GM12878 (cell line): ENCODE measurements at regions of chr7 and their contacts with region 1.

Region 1: DNA sequence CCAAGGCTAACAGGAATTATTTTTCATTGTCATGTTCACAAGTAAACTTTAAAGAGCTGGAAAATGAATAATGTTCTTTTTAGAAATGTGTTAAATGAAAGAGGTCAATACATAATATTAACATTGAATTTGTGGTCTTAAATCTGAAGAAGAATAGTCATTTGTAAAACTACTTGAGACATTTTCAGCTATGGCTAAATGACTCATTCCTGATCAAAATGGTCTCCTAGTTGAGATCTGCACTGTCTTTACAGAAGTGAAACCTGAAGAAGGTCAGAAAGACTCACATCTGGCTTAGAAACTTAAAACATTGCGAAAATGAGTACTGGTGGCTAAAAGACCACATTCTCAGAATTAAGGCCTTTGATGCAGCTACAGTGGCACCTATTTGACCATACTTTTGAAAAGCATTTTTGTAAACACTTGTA is 5.9 kb downstream of the PIK3CG start:
- DNase-seq: peak; percentile 95
- ATAC-seq: peak; percentile 90
- H3K4me3 ChIP-seq: no peak overlapping the region
- H3K27ac ChIP-seq: no peak overlapping the region; the same call in 1 of the 2 replicates
- H3K4me1 ChIP-seq: peaks cover 35% of the 10 kb centered on the region
- H3K27me3 ChIP-seq: no peaks in the 10 kb centered on the region
- CTCF ChIP-seq: no peak
- EP300 ChIP-seq: peak; percentile 98 to 100
- POLR2A ChIP-seq: no peak
- RAD21 ChIP-seq: no peak

Region 2: DNA sequence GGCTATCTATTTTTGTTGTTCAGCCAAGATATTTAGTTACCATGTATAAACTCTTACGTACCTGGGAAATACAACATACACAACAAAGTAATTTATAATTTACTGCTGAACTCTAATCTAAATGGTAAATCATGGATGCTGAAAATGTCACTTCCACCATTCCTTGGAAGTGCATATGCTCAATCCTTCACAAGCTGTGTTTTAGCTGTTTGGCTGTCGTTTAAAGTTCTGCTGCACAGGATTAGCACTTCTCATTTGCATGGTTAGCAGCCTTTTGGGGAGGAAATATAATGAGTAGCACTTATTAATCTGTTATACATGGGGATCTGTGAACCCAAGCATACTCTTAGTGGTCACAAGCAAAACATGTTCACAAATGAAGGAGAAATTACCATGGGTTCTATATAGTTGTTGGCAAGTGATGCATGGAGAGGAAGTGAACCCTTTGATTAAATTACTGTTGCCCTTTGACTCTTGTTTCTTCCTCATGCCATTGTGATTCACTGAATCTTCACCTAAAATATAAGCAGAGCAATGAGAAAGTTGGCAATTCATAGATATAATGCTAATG is 12.5 kb after region 1 on chr7:
- CTCF ChIA-PET with region 1: no interaction called
- POLR2A ChIA-PET with region 1: no interaction called
- RAD21 ChIA-PET with region 1: interaction called, 3 read pairs
- SMC1A ChIA-PET with region 1: interaction called, 10 read pairs
- in situ Hi-C with region 1: no loop called
- intact Hi-C with region 1: loop called (anchors 1 kb)
- DNase-seq: peak; percentile 35
- ATAC-seq: peak; percentile 89
- H3K4me3 ChIP-seq: no peak overlapping the region
- H3K27ac ChIP-seq: no peak overlapping the region
- H3K4me1 ChIP-seq: peaks cover 9% of the 10 kb centered on the region
- H3K27me3 ChIP-seq: no peaks in the 10 kb centered on the region
- CTCF ChIP-seq: no peak
- EP300 ChIP-seq: no peak
- POLR2A ChIP-seq: no peak
- RAD21 ChIP-seq: no peak

Region 3: DNA sequence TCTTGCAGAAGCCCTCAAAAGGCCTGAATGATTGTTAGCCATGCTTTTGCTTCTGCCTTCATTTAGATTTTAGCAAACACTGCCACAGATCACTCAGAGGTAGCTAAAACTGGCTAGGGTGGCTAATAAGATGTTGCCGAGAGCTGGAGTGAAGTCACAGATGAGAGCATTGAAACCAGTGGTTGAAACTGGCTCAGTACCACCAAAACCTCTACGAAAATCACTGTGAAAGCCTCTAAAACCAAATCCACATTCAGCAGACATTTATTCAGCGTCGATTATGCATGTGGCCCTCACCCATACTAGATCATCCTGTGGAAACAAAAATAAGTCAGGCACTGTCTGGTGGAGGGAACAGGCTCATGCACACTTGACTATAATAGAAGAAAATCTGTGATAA is 44.9 kb after region 1 on chr7:
- CTCF ChIA-PET with region 1: no interaction called
- POLR2A ChIA-PET with region 1: no interaction called
- RAD21 ChIA-PET with region 1: no interaction called
- SMC1A ChIA-PET with region 1: interaction called, 6 read pairs
- in situ Hi-C with region 1: no loop called
- intact Hi-C with region 1: loop called (anchors 1 kb)
- DNase-seq: peak; percentile 51
- ATAC-seq: peak; percentile 99
- H3K4me3 ChIP-seq: no peak overlapping the region
- H3K27ac ChIP-seq: no peak overlapping the region
- H3K4me1 ChIP-seq: peaks cover 2% of the 10 kb centered on the region; the same call in 1 of the 2 replicates
- H3K27me3 ChIP-seq: peaks cover 0 to 9% of the 10 kb centered on the region in 2 experiments; a peak in 3 of 4 replicates
- CTCF ChIP-seq: no peak
- EP300 ChIP-seq: peak in 1 of 2 experiments; percentile 23; a peak in 1 of 4 replicates
- POLR2A ChIP-seq: no peak
- RAD21 ChIP-seq: no peak